ENCODE measurements at regions of chr9 and their contacts with region 1.

Region 1: GRCh38 chr9:76873056-76873792 is 32.7 kb downstream of the PRUNE2 start:
- DNase-seq: no peak
- H3K4me3 ChIP-seq: no peak overlapping the region
- H3K27ac ChIP-seq: peak overlapping the region; percentile 54 to 79 (median 64)
- H3K4me1 ChIP-seq: peaks cover 0 to 14% (median 4%) of the 10 kb centered on the region in 4 donors
- H3K27me3 ChIP-seq: no peaks in the 10 kb centered on the region
- CTCF ChIP-seq: no peak
- EP300 ChIP-seq: no peak
- POLR2A ChIP-seq: no peak

Region 2: DNA sequence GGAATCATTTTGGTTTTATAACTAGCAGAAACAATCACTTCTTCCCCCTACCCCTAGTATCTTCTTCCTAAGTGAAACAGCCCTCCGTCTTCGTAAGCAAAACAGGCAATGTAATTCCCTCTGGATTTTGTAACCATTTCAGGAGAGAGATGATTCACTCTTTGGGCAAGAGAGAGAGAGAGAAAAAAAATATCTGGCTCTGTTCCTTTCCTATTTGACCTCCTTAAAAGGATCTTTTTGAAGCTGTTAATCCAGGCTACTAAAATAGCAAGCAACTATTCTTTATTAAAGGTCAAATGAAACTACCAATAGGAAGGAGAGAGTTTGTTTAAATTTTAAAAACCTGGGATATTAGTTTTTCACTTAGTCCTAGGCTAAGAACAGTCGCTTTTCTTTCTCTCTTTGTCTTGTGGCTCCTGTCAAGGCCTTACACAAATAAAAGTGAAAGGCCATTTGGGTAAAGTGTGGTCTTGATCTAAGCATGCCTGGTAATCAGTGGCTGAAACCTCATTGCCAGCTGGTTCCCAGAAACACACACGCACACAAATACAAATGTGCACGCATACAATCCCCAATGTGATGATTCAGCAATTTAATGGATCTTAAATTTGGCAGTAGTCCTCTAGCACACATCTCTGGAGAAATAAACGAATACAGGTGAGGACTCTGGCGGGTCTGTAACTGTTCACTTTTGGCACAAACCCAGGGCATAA is 37.5 kb before region 1 on chr9:
- in situ Hi-C with region 1: no loop called
- intact Hi-C with region 1: loop called (anchors 2 kb)
- DNase-seq: no peak
- H3K4me3 ChIP-seq: no peak overlapping the region
- H3K27ac ChIP-seq: peak overlapping the region; percentile 70 to 86 (median 77)
- H3K4me1 ChIP-seq: peaks cover 0 to 18% (median 2%) of the 10 kb centered on the region in 4 donors
- H3K27me3 ChIP-seq: no peaks in the 10 kb centered on the region
- CTCF ChIP-seq: no peak
- EP300 ChIP-seq: peak; percentile 85
- POLR2A ChIP-seq: peak; percentile 18

Region 3: DNA sequence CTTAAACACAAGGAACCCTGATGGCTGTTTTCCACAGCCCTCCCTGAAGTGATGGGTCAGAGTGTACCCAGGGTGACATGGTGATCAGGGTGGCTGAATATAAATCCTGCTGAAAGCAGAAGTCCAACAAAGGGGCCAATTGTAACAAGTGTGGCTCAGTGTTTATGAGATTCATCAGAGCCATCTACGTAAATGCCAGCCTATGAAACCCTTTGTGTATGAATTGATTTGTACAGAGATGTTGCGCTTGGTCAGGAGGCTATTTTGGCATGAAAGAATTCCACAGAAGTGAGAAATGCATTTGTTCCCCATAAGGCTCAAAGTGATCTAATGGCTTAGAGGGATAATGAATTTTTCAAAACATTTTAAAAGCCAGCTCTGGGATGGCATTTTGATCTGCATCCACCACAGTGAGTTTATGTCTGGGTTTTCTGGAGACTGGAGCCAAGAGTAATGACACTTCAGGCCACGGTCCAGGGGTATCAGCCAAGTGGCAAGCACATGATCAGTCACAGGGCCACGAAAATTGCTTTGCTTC is 20.2 kb after region 1 on chr9:
- in situ Hi-C with region 1: no loop called
- intact Hi-C with region 1: no loop called
- DNase-seq: no peak
- H3K4me3 ChIP-seq: no peak overlapping the region
- H3K27ac ChIP-seq: peak overlapping the region; percentile 53 to 91 (median 81)
- H3K4me1 ChIP-seq: peaks cover 15 to 20% (median 17%) of the 10 kb centered on the region in 4 donors
- H3K27me3 ChIP-seq: no peaks in the 10 kb centered on the region
- CTCF ChIP-seq: no peak
- EP300 ChIP-seq: peak; percentile 88
- POLR2A ChIP-seq: no peak

Region 4: GRCh38 chr9:76987594-76988200 is 114.5 kb after region 1 on chr9:
- in situ Hi-C with region 1: no loop called
- intact Hi-C with region 1: no loop called
- DNase-seq: peak; percentile 51
- H3K4me3 ChIP-seq: no peak overlapping the region
- H3K27ac ChIP-seq: no peak overlapping the region
- H3K4me1 ChIP-seq: no peaks in the 10 kb centered on the region
- H3K27me3 ChIP-seq: peaks cover 36% of the 10 kb centered on the region
- CTCF ChIP-seq: peak; percentile 51 to 66 (median 53)
- EP300 ChIP-seq: no peak
- POLR2A ChIP-seq: no peak

Measured in transverse colon (tissue), 4 donors.